K562 (cell line): ENCODE measurements at regions of chr10 and their contacts with region 1.

Region 1: DNA sequence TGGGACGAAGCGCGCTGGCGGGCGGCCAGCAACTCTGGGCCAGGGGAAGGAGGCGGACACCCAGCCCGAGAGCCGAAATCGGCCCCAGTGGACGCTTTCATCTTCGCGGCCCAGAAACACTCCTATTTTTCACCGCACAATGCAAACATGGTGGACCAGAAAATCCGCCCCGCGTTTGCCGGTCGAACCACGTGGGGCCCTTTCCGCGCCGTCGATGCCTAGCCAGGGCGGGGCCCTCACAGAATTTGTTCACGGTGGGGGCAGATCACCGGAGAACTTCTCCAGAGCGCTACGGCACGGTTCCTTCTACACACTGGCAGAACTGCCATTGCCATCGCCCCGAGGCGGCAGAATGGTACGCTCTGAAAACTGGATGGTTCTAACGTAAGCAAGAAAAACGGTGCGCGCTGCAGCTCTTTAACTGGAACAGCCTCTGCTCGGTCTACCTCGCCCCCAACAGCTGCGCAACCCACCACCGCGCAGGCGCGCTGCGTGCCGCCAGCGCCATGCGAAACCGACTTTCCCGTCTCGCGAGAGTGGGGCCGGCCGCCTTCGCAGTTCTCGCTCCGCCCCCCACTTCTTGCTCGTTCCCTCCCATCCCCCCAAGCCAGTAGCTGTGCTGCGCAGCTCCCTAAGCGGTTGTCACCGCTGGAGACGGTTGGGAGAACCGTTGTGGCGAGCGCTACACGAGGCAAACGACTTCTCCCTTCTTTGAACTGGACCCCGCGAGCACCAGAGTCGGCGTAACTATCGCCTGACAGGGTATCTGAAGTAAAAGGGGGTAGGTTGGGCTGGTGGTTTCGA is at the start of gene HNRNPH3:
- DNase-seq: peak; percentile 96 to 100 (median 97)
- ATAC-seq: peak; percentile 85
- H3K4me3 ChIP-seq: peak within 1 kb of the TSS; percentile 66
- H3K27ac ChIP-seq: peak within 1 kb of the TSS; percentile 98
- H3K4me1 ChIP-seq: peaks cover 20 to 28% of the 10 kb centered on the region in 2 experiments
- H3K27me3 ChIP-seq: no peaks in the 10 kb centered on the region
- CTCF ChIP-seq: peak in 2 of 3 experiments; percentile 8 to 45; a peak in 2 of 6 replicates
- EP300 ChIP-seq: peak; percentile 42; the same call in 1 of the 2 replicates
- POLR2A ChIP-seq: peak; percentile 99
- RAD21 ChIP-seq: no peak; a peak in 1 of 4 replicates
- polyA plus RNA-seq, gene HNRNPH3: 129 to 208 TPM

Region 2: DNA sequence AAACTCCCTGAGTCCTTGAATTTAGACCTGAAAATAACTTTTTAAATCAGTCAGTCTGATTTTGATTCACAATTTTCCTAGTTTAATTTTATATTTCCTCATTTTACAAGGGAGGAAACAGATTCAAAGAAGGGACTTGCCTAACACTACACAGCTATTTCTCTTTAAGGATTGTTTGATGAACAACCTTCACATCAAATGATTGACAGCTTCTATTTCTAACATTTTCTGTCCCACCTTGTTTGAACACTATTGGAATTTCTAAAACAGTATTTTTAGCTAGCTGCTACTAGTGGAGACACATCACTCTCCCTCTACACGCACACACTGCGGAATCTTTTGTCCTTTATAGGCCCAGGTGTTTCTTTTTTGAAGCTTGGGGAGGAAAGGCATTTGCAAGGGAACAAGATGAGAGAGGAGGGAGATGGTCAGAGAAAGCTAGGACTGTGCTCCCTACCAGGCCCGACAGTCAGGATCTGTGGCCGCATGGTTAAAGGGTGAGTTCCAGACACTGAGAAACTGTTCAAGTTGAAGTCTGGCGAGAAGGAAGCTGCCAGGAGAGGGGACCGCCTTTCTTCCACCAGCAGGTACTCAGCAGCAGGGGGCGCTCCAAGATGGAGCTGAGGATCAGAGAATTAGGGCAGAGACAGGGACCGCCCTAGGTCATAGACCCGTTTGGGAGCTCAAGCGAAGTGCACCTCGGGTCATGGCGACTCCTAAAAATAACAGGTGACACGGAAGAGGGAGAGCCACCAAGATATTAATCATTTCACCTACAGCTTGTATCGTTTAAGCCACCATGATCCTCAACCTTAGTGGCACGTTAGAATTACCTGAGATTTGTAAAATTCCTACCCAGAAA is 543.4 kb before region 1 on chr10:
- CTCF ChIA-PET with region 1: no interaction called
- POLR2A ChIA-PET with region 1: interaction called, 5 read pairs
- in situ Hi-C with region 1: no loop called
- intact Hi-C with region 1: loop called (anchors 10 kb)
- DNase-seq: peak; percentile 84 to 90 (median 88)
- ATAC-seq: peak; percentile 89
- H3K4me3 ChIP-seq: no peak overlapping the region
- H3K27ac ChIP-seq: no peak overlapping the region
- H3K4me1 ChIP-seq: peaks cover 0 to 14% of the 10 kb centered on the region in 2 experiments; a peak in 4 of 5 replicates
- H3K27me3 ChIP-seq: no peaks in the 10 kb centered on the region
- CTCF ChIP-seq: peak; percentile 87 to 95 (median 94)
- EP300 ChIP-seq: no peak
- POLR2A ChIP-seq: no peak
- RAD21 ChIP-seq: peak; percentile 95 to 98

Region 3: GRCh38 chr10:67875340-67876238 is 456.1 kb before region 1 on chr10:
- CTCF ChIA-PET with region 1: no interaction called
- POLR2A ChIA-PET with region 1: no interaction called
- in situ Hi-C with region 1: loop called (anchors 10 kb)
- intact Hi-C with region 1: no loop called
- DNase-seq: no peak
- ATAC-seq: no peak; the same call in 2 of the 3 replicates
- H3K4me3 ChIP-seq: no peak overlapping the region
- H3K27ac ChIP-seq: no peak overlapping the region
- H3K4me1 ChIP-seq: peaks cover 0 to 4% of the 10 kb centered on the region in 2 experiments; a peak in 2 of 5 replicates
- H3K27me3 ChIP-seq: no peaks in the 10 kb centered on the region
- CTCF ChIP-seq: no peak
- EP300 ChIP-seq: no peak
- POLR2A ChIP-seq: no peak
- RAD21 ChIP-seq: no peak

Region 4: GRCh38 chr10:67969875-67970274 is 361.8 kb before region 1 on chr10:
- CTCF ChIA-PET with region 1: no interaction called
- POLR2A ChIA-PET with region 1: no interaction called
- in situ Hi-C with region 1: no loop called
- intact Hi-C with region 1: no loop called
- DNase-seq: no peak
- ATAC-seq: no peak
- H3K4me3 ChIP-seq: no peak overlapping the region
- H3K27ac ChIP-seq: no peak overlapping the region
- H3K4me1 ChIP-seq: no peaks in the 10 kb centered on the region
- H3K27me3 ChIP-seq: no peaks in the 10 kb centered on the region
- CTCF ChIP-seq: no peak
- EP300 ChIP-seq: no peak
- POLR2A ChIP-seq: no peak
- RAD21 ChIP-seq: no peak

Region 5: DNA sequence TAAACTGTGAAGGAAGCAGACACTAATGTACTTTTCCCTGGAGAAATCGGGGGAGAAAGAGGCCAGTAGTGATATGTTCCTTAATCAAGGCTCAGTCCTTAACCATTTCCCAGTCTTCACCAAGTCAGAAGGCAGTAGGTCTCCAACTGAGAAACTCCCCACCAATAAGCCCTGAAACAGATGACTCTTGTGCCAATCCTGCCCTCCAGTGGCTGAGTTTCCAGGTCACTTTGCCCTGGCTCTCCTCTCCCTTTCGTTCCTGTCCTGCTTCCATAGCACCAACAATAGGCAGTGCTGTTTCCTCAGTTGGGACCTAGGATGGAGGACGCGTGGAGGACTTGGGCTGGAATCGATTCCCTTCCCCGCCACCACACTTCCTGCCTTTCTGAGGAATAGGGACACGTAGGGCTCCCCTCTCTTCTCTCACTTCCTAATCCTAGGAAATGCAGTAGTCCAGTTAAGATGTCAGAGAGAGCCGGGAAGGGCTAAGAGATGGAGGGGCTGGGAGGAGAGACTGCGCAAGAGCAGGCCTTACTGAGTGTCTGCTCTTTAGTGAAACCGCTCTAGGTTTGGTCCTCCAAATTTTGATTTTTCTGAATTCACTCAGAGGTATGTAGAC is 123.1 kb before region 1 on chr10:
- CTCF ChIA-PET with region 1: interaction called, 3 read pairs
- POLR2A ChIA-PET with region 1: interaction called, 9 read pairs
- in situ Hi-C with region 1: no loop called
- intact Hi-C with region 1: loop called (anchors 1 kb)
- DNase-seq: peak in 3 of 4 experiments; percentile 25 to 62 (median 46)
- ATAC-seq: peak; percentile 84
- H3K4me3 ChIP-seq: no peak overlapping the region
- H3K27ac ChIP-seq: no peak overlapping the region
- H3K4me1 ChIP-seq: no peaks in the 10 kb centered on the region
- H3K27me3 ChIP-seq: peaks cover 30 to 32% of the 10 kb centered on the region in 2 experiments
- CTCF ChIP-seq: peak; percentile 67 to 73 (median 70)
- EP300 ChIP-seq: no peak
- POLR2A ChIP-seq: no peak
- RAD21 ChIP-seq: peak; percentile 56 to 83

Region 6: GRCh38 chr10:68348265-68348741 is 16.6 kb after region 1 on chr10:
- CTCF ChIA-PET with region 1: no interaction called
- POLR2A ChIA-PET with region 1: interaction called, 104 read pairs
- in situ Hi-C with region 1: no loop called
- intact Hi-C with region 1: no loop called
- DNase-seq: peak; percentile 56 to 73 (median 56)
- ATAC-seq: peak; percentile 80
- H3K4me3 ChIP-seq: no peak overlapping the region
- H3K27ac ChIP-seq: no peak overlapping the region
- H3K4me1 ChIP-seq: no peaks in the 10 kb centered on the region
- H3K27me3 ChIP-seq: no peaks in the 10 kb centered on the region
- CTCF ChIP-seq: peak; percentile 74 to 82 (median 80)
- EP300 ChIP-seq: no peak
- POLR2A ChIP-seq: no peak
- RAD21 ChIP-seq: peak in 1 of 2 experiments; percentile 57; a peak in 3 of 4 replicates

Region 7: DNA sequence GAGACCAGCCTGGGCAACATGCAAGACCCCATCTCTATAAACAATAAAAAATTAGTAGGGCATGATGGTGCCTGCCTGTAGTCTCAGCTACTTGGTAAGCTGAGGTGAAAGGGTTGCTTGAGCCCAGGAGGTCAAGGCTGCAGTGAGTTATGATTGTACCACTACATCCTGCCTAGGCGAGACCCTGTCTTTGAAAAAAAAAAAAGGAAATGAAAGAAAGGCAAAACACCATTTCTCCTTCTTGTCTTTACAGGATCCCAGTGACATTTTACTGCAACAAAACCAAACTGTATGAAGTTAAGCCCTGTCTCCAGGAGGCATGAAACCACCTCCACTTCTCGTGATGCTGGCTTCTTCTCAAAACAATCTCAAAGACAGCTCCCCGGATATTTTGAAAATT is 30.9 kb after region 1 on chr10:
- CTCF ChIA-PET with region 1: interaction called, 3 read pairs
- POLR2A ChIA-PET with region 1: interaction called, 16 read pairs
- in situ Hi-C with region 1: no loop called
- intact Hi-C with region 1: no loop called
- DNase-seq: no peak
- ATAC-seq: no peak
- H3K4me3 ChIP-seq: no peak overlapping the region
- H3K27ac ChIP-seq: no peak overlapping the region
- H3K4me1 ChIP-seq: no peaks in the 10 kb centered on the region
- H3K27me3 ChIP-seq: no peaks in the 10 kb centered on the region
- CTCF ChIP-seq: no peak
- EP300 ChIP-seq: no peak
- POLR2A ChIP-seq: no peak
- RAD21 ChIP-seq: no peak